ENCODE measurements at regions of chr1 and their contacts with region 1.

Region 1: GRCh38 chr1:150515328-150516048 is at the start of gene FALEC:
- DNase-seq: peak; percentile 74
- ATAC-seq: peak; percentile 99
- H3K4me3 ChIP-seq: peak within 1 kb of the TSS; percentile 74
- H3K27ac ChIP-seq: peak within 1 kb of the TSS; percentile 50; the same call in 1 of the 2 replicates
- H3K4me1 ChIP-seq: peaks cover 17% of the 10 kb centered on the region
- H3K27me3 ChIP-seq: no peaks in the 10 kb centered on the region
- CTCF ChIP-seq: no peak
- EP300 ChIP-seq: no peak
- POLR2A ChIP-seq: peak; percentile 70
- RAD21 ChIP-seq: no peak
- polyA plus RNA-seq, gene FALEC: 0.21 TPM in 1 of 2 experiments, not detected in the other

Region 2: GRCh38 chr1:150464422-150464826 is 51.1 kb before region 1 on chr1:
- CTCF ChIA-PET with region 1: interaction called, 10 read pairs
- POLR2A ChIA-PET with region 1: no interaction called
- RAD21 ChIA-PET with region 1: no interaction called
- SMC1A ChIA-PET with region 1: interaction called, 4 read pairs
- in situ Hi-C with region 1: no loop called
- intact Hi-C with region 1: loop called (anchors 5 kb)
- DNase-seq: no peak
- ATAC-seq: peak; percentile 82
- H3K4me3 ChIP-seq: no peak overlapping the region
- H3K27ac ChIP-seq: no peak overlapping the region
- H3K4me1 ChIP-seq: no peaks in the 10 kb centered on the region
- H3K27me3 ChIP-seq: no peaks in the 10 kb centered on the region
- CTCF ChIP-seq: peak; percentile 70 to 85 (median 72)
- EP300 ChIP-seq: no peak
- POLR2A ChIP-seq: no peak
- RAD21 ChIP-seq: peak; percentile 77

Region 3: DNA sequence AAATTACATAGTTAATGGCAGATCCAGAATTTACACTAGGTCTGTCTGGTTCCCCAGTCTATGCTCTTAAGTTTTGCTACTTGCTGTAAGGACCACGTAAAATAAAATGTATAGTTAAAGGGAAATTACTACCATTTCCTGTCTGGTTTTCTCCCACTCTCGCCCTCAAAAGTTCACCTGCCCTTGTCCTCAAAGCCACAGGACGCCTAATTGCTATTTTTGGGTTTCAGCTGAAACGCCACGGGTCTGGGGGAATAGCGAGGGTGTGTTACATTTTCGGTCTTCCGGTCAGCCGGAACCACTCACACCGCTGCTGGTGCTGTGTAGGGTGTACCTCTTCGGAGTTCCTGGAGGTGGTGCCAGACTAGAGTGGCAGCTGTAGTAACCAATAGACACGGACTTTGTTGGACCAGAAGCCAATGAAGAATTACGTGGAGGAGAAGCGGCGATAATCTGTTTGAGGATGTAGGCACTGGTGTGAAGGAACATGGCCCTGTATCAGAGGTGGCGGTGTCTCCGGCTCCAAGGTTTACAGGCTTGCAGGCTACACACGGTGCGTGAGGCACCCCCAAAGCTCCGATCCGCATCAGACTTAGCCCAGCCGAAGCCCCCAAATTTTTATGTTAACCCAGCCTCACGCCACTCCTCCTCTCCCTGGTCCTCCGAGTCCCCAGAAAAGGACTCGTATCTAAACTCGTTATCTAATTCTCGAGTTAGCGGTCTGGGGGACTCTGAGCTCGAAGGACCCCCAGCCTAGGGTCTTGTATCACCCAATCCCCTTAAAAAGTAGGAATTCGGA is 28.3 kb before region 1 on chr1 and contains the start of gene TARS2:
- CTCF ChIA-PET with region 1: interaction called, 3 read pairs
- POLR2A ChIA-PET with region 1: interaction called, 5 read pairs
- RAD21 ChIA-PET with region 1: interaction called, 6 read pairs
- SMC1A ChIA-PET with region 1: interaction called, 11 read pairs
- in situ Hi-C with region 1: no loop called
- intact Hi-C with region 1: no loop called
- DNase-seq: peak; percentile 99
- ATAC-seq: peak; percentile 100
- H3K4me3 ChIP-seq: peak within 1 kb of the TSS; percentile 95
- H3K27ac ChIP-seq: peak within 1 kb of the TSS; percentile 86
- H3K4me1 ChIP-seq: no peaks in the 10 kb centered on the region
- H3K27me3 ChIP-seq: no peaks in the 10 kb centered on the region
- CTCF ChIP-seq: no peak
- EP300 ChIP-seq: peak in 1 of 2 experiments; percentile 38; a peak in 1 of 4 replicates
- POLR2A ChIP-seq: peak; percentile 96
- RAD21 ChIP-seq: no peak
- polyA plus RNA-seq, gene TARS2: 11.0 to 14.6 TPM

Region 4: GRCh38 chr1:150529017-150529416 is 13.5 kb after region 1 on chr1:
- CTCF ChIA-PET with region 1: interaction called, 36 read pairs
- POLR2A ChIA-PET with region 1: interaction called, 3 read pairs
- RAD21 ChIA-PET with region 1: interaction called, 4 read pairs
- SMC1A ChIA-PET with region 1: interaction called, 26 read pairs
- in situ Hi-C with region 1: no loop called
- intact Hi-C with region 1: no loop called
- DNase-seq: no peak
- ATAC-seq: no peak
- H3K4me3 ChIP-seq: no peak overlapping the region
- H3K27ac ChIP-seq: no peak overlapping the region
- H3K4me1 ChIP-seq: no peaks in the 10 kb centered on the region; the same call in 1 of the 2 replicates
- H3K27me3 ChIP-seq: no peaks in the 10 kb centered on the region
- CTCF ChIP-seq: no peak
- EP300 ChIP-seq: no peak
- POLR2A ChIP-seq: no peak
- RAD21 ChIP-seq: no peak

Region 5: DNA sequence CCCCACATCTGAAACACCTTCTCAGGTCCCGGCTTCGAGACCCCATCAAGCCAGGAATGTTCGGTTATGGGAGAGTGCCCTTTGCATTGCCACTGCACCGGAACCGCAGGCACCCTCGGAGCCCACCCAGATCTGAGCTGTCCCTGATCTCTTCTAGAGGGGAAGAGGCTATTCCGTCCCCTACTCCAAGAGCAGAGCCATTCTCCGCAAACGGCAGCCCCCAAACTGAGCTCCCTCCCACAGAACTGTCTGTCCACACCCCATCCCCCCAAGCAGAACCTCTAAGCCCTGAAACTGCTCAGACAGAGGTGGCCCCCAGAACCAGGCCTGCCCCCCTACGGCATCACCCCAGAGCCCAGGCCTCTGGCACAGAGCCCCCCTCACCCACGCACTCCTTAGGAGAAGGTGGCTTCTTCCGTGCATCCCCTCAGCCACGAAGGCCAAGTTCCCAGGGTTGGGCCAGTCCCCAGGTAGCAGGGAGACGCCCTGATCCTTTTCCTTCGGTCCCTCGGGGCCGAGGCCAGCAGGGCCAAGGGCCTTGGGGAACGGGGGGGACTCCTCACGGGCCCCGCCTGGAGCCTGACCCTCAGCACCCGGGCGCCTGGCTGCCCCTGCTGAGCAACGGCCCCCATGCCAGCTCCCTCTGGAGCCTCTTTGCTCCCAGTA is 38.0 kb after region 1 on chr1:
- CTCF ChIA-PET with region 1: no interaction called
- POLR2A ChIA-PET with region 1: no interaction called
- RAD21 ChIA-PET with region 1: no interaction called
- SMC1A ChIA-PET with region 1: no interaction called
- in situ Hi-C with region 1: no loop called
- intact Hi-C with region 1: no loop called
- DNase-seq: no peak
- ATAC-seq: no peak
- H3K4me3 ChIP-seq: no peak overlapping the region
- H3K27ac ChIP-seq: no peak overlapping the region
- H3K4me1 ChIP-seq: peaks cover 2% of the 10 kb centered on the region; the same call in 1 of the 2 replicates
- H3K27me3 ChIP-seq: no peaks in the 10 kb centered on the region; a peak in 1 of 4 replicates
- CTCF ChIP-seq: no peak
- EP300 ChIP-seq: no peak
- POLR2A ChIP-seq: peak; percentile 30; the same call in 1 of the 2 replicates
- RAD21 ChIP-seq: no peak

Region 6: GRCh38 chr1:150578965-150579798 is 63.7 kb after region 1 on chr1 and contains the start of gene MCL1:
- CTCF ChIA-PET with region 1: no interaction called
- POLR2A ChIA-PET with region 1: interaction called, 11 read pairs
- RAD21 ChIA-PET with region 1: interaction called, 4 read pairs
- SMC1A ChIA-PET with region 1: no interaction called
- in situ Hi-C with region 1: no loop called
- intact Hi-C with region 1: no loop called
- DNase-seq: peak; percentile 69
- ATAC-seq: peak; percentile 90
- H3K4me3 ChIP-seq: peak within 1 kb of the TSS; percentile 85
- H3K27ac ChIP-seq: peak within 1 kb of the TSS; percentile 96
- H3K4me1 ChIP-seq: peaks cover 3% of the 10 kb centered on the region; the same call in 1 of the 2 replicates
- H3K27me3 ChIP-seq: no peaks in the 10 kb centered on the region
- CTCF ChIP-seq: no peak
- EP300 ChIP-seq: peak in 1 of 2 experiments; percentile 47; a peak in 1 of 4 replicates
- POLR2A ChIP-seq: peak; percentile 94
- RAD21 ChIP-seq: 0 out of 2 replicates have a peak, but pooled peaks have one; percentile 15
- polyA plus RNA-seq, gene MCL1: 18.1 to 25.5 TPM

Region 7: DNA sequence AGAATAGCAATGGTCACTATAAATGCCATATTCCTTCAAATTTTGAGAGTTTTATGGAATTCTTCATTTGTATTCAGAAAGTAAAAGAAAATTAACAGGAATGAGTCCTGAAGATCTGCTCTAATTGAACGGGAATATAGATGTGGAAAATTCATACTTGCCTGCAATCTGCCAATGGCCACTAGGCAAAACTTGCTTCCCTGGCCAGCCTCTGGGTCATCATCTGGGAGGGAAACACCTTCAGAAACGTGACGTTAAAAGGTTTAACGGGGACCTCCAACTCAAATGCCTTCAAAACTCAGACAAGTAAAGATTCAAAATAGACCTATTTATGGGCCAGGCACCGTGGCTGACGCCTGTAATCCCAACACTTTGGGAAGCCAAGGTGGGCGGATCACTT is 314.3 kb after region 1 on chr1:
- CTCF ChIA-PET with region 1: no interaction called
- POLR2A ChIA-PET with region 1: no interaction called
- RAD21 ChIA-PET with region 1: no interaction called
- SMC1A ChIA-PET with region 1: no interaction called
- in situ Hi-C with region 1: no loop called
- intact Hi-C with region 1: no loop called
- DNase-seq: no peak
- ATAC-seq: no peak
- H3K4me3 ChIP-seq: no peak overlapping the region
- H3K27ac ChIP-seq: no peak overlapping the region
- H3K4me1 ChIP-seq: no peaks in the 10 kb centered on the region
- H3K27me3 ChIP-seq: no peaks in the 10 kb centered on the region
- CTCF ChIP-seq: peak in 2 of 3 experiments; percentile 28 to 29; a peak in 2 of 6 replicates
- EP300 ChIP-seq: no peak
- POLR2A ChIP-seq: no peak
- RAD21 ChIP-seq: no peak

Region 8: DNA sequence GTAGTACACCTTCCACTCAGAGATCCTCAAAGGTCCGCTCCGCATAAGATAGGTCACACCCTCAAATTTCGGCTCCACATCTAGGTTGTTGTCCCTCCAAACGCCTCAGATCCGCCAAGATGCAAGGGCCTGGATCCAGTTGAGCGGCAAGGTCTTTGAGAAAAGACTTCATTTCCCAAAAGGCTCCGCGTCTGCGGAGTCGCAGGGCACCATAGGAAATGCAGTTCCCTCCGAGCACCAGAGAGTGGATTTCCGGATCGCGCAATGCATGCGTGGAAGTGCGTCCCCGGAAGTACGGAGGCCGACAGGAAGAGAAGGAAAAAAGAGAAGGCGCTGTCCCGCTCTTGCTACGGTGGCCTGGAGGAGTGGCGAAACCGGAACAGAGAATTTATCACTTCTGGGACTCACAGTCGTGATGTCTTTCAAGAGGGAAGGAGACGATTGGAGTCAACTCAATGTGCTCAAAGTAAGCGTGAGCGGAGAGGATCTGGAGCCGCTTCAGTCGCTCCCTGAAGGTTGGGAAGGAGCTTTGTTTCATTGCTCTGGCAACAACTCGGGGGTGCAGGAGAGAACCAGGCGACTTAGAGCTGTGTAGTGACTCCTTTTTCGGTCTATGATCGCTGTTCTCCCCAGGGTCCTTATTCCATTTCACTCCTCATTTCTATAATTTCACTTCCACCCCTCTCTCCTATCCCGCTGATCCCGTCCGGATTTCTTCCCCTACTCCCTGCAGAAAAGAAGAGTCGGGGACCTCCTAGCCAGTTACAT is 650.4 kb after region 1 on chr1 and contains the starts of genes LYSMD1 and SCNM1:
- CTCF ChIA-PET with region 1: no interaction called
- POLR2A ChIA-PET with region 1: interaction called, 11 read pairs
- RAD21 ChIA-PET with region 1: no interaction called
- SMC1A ChIA-PET with region 1: no interaction called
- in situ Hi-C with region 1: no loop called
- intact Hi-C with region 1: no loop called
- DNase-seq: peak; percentile 97
- ATAC-seq: peak; percentile 98
- H3K4me3 ChIP-seq: peak within 1 kb of the TSS; percentile 98
- H3K27ac ChIP-seq: peak within 1 kb of the TSS; percentile 70
- H3K4me1 ChIP-seq: peaks cover 9% of the 10 kb centered on the region
- H3K27me3 ChIP-seq: no peaks in the 10 kb centered on the region
- CTCF ChIP-seq: no peak
- EP300 ChIP-seq: 0 out of 4 replicates have a peak, but pooled peaks of 1 of the 2 experiments have one; percentile 7
- POLR2A ChIP-seq: peak; percentile 83
- RAD21 ChIP-seq: no peak
- polyA plus RNA-seq, gene LYSMD1: 0.80 to 1.9 TPM
- polyA plus RNA-seq, gene SCNM1: 191 to 207 TPM

Measured in GM12878 (cell line).